Spleen (tissue), 13 donors: ENCODE measurements at regions of chr1 and their contacts with region 1.

Region 1: GRCh38 chr1:17502326-17502778 is 37.1 kb upstream of the ARHGEF10L start:
- DNase-seq: peak; percentile 89
- H3K4me3 ChIP-seq: no peak overlapping the region
- H3K27ac ChIP-seq: no peak overlapping the region
- H3K4me1 ChIP-seq: peaks cover 0 to 10% (median 4%) of the 10 kb centered on the region in 6 donors
- H3K27me3 ChIP-seq: peaks cover 0 to 9% (median 0%) of the 10 kb centered on the region in 7 donors
- CTCF ChIP-seq: peak; percentile 43 to 89 (median 76)
- POLR2A ChIP-seq: no peak

Region 2: GRCh38 chr1:17574516-17574915 is 72.2 kb after region 1 on chr1:
- intact Hi-C with region 1: no loop called
- DNase-seq: no peak
- H3K4me3 ChIP-seq: no peak overlapping the region
- H3K27ac ChIP-seq: peak overlapping the region in 2 of 8 donors; percentile 30 to 41
- H3K4me1 ChIP-seq: peaks cover 0 to 59% (median 16%) of the 10 kb centered on the region in 6 donors
- H3K27me3 ChIP-seq: no peaks in the 10 kb centered on the region
- CTCF ChIP-seq: no peak
- POLR2A ChIP-seq: no peak

Region 3: DNA sequence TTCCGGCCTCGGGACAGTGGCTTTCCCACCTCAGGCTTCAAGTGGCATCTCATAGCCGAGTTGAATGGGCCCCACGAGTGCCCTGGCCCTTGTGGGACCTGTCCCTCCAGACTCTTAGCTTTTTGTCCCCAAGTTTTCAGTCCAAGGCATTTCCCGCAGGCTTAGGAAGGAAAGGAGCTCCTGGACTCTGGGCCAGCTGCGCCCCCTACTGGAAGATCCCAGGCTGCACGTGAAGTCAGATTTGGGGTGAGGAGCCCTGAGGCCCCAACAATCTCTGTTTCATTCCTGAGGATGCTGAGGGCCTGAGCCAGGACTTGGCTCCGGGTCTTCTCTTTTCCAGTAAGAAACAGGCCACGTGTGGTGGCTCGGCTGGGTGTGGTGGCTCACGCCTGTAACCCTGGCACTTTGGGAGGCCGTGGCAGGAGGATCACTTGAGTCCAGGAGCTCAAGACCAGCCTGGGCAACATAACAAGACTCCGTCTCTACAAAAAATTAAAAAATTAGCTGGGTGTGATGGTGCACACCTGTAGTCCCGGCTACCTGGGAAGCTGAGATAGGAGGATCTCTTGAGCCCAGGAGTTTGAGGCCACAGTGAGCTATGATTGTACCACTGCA is 104.6 kb after region 1 on chr1:
- intact Hi-C with region 1: loop called (anchors 1 kb)
- DNase-seq: no peak
- H3K4me3 ChIP-seq: no peak overlapping the region
- H3K27ac ChIP-seq: peak overlapping the region in 1 of 8 donors; percentile 28
- H3K4me1 ChIP-seq: peaks cover 0 to 19% (median 2%) of the 10 kb centered on the region in 6 donors
- H3K27me3 ChIP-seq: peaks cover 0 to 9% (median 0%) of the 10 kb centered on the region in 7 donors
- CTCF ChIP-seq: peak in 10 of 11 experiments; percentile 53 to 88 (median 81)
- POLR2A ChIP-seq: no peak